Esophagus muscularis mucosa (tissue), 4 donors: ENCODE measurements at regions of chr22 and their contacts with region 1.

Region 1: GRCh38 chr22:49381595-49382450 is 445.9 kb downstream of the BRD1 start:
- DNase-seq: no peak
- H3K4me3 ChIP-seq: no peak overlapping the region
- H3K27ac ChIP-seq: no peak overlapping the region
- H3K4me1 ChIP-seq: no peaks in the 10 kb centered on the region
- H3K27me3 ChIP-seq: peaks cover 0 to 60% (median 0%) of the 10 kb centered on the region in 4 donors
- CTCF ChIP-seq: no peak
- EP300 ChIP-seq: no peak
- POLR2A ChIP-seq: no peak

Region 2: DNA sequence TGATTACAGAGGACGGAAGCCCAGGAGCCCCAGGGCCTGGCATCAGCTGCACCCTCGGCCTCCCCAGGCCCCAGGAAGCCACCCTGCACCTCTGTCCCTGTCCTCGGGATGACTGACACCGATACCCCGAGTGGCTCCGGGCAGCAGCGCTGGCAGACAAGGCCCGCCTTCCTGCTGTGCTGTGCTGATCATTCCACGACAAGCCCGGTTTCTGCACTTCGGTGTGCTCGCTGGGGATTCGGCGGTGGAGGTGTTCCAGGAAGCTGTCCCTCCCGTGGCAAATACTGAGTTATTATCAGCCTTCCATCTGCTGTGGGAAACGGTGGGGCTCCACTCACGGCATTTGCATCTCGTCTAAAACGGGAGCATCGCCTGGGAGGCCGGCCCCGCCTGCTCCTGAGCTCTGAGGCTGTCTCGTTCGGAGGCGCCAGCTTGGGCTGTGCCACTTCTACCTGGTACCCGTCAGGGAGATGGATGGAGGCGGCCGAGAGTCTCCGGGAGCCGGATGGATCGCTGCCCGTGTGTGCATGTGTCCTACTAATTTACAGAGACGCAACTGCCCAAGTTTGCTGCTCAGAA is 60.3 kb before region 1 on chr22:
- intact Hi-C with region 1: loop called (anchors 10 kb)
- DNase-seq: peak; percentile 64
- H3K4me3 ChIP-seq: no peak overlapping the region
- H3K27ac ChIP-seq: no peak overlapping the region
- H3K4me1 ChIP-seq: no peaks in the 10 kb centered on the region
- H3K27me3 ChIP-seq: peaks cover 0 to 75% (median 0%) of the 10 kb centered on the region in 4 donors
- CTCF ChIP-seq: no peak
- EP300 ChIP-seq: no peak
- POLR2A ChIP-seq: no peak